Activated CD4-positive, alpha-beta T cell treated with anti-CD3 and anti-CD28 coated beads, Interleukin-2, amount 10 ng/mL, durations not matched to agents 7 days and 5 days (primary cell): ENCODE measurements at regions of chr11 and their contacts with region 1.

Region 1: GRCh38 chr11:86162239-86162638 is 82.3 kb upstream of the EED start:
- DNase-seq: no peak
- H3K4me3 Mint-ChIP-seq: no peak overlapping the region
- H3K27ac Mint-ChIP-seq: no peak overlapping the region
- H3K4me1 Mint-ChIP-seq: peaks cover 23% of the 10 kb centered on the region
- H3K27me3 Mint-ChIP-seq: peaks cover 8% of the 10 kb centered on the region

Region 2: GRCh38 chr11:86151174-86152005 is 10.8 kb before region 1 on chr11:
- CTCF ChIA-PET with region 1: interaction called, 52 read pairs
- POLR2A ChIA-PET with region 1: no interaction called
- DNase-seq: no peak
- H3K4me3 Mint-ChIP-seq: no peak overlapping the region
- H3K27ac Mint-ChIP-seq: no peak overlapping the region
- H3K4me1 Mint-ChIP-seq: peaks cover 26% of the 10 kb centered on the region
- H3K27me3 Mint-ChIP-seq: no peaks in the 10 kb centered on the region